ENCODE measurements at regions of chr2 and their contacts with region 1.

Region 1: DNA sequence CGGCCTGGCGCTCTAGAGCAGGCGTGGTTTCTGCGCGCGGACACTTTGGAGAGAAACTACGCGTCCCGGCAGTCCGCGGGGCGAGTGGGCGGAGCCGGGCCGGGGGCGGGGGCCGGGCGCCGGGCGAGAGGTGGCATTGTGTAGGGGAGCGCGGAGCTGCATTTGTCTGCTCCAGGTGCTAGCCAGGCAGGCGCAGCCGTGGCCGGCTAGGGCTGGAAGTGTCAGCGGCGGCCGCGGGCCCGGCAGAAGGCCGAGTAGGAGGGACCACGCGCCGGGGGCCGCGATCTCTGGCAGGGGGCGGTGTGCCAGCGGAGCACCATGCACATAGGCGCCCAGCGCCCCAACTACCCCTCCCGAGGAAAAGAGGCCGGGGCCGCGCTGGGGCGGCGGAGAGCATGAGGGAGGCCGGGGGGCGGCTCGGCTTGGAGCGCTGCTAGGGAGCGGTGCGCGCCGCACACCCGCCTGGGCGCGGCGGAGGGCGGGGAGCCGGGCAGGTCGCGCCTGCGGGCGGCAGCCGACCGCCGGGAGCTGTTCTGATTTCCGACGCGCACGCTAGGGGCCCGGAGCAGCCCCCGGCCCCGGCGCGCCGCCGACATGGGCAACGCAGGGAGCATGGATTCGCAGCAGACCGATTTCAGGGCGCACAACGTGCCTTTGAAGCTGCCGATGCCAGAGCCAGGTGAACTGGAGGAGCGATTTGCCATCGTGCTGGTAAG is at the start of gene FMNL2:
- DNase-seq: peak; percentile 83
- H3K4me3 ChIP-seq: peak within 1 kb of the TSS; percentile 81 to 93 (median 81)
- H3K27ac ChIP-seq: peak within 1 kb of the TSS; percentile 59
- H3K4me1 ChIP-seq: peaks cover 16% of the 10 kb centered on the region
- H3K27me3 ChIP-seq: no peaks in the 10 kb centered on the region
- CTCF ChIP-seq: peak in 1 of 2 donors; percentile 8
- total RNA-seq, gene FMNL2: 26.5 to 62.9 TPM

Region 2: GRCh38 chr2:152234277-152234676 is 100.9 kb before region 1 on chr2:
- CTCF ChIA-PET with region 1: no interaction called
- dilution Hi-C with region 1: loop called (anchors 5 kb)
- in situ Hi-C with region 1: no loop called
- intact Hi-C with region 1: no loop called
- DNase-seq: no peak
- H3K4me3 ChIP-seq: no peak overlapping the region
- H3K27ac ChIP-seq: no peak overlapping the region
- H3K4me1 ChIP-seq: no peaks in the 10 kb centered on the region
- H3K27me3 ChIP-seq: no peaks in the 10 kb centered on the region
- CTCF ChIP-seq: no peak

Region 3: DNA sequence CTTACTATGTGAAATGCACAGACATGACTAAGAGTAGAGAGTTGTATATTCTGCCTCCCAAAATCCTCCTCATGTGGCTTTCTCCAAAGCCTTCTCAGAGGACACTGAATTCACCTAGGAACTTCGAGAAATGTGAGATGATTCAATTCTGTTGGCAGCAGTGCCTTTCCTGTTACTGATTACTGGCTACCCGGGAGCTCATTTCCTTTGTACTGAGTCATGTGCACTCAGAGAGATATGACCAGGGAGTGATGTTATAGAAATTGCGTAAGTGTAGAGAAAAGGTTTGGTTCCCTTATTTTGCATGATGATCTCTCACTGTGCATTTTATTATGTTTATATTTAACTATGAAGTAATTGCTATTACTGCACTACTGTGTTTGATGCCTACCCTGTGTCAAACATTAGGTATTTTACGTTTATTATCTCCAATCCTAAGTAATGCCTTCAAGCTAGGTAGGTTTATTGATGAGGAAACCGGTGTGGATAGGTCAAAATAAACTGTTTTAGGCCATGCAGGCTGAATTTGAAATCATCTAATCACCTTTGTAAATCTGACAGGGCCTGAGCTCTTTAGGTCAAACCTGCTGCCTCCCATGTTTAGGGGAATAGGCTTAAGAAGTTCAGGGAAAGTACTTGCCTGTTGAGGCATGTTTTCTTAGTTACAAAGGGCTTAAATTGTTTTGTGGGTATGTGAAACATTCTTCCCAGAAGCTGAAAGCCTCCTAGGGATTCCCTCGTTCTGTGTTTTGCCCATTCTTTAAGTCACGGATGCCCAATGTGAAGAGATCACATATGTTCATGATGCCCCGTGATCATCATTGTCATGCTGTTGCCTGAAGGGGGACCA is 86.6 kb after region 1 on chr2:
- CTCF ChIA-PET with region 1: no interaction called
- dilution Hi-C with region 1: no loop called
- in situ Hi-C with region 1: no loop called
- intact Hi-C with region 1: loop called (anchors 1 kb)
- DNase-seq: peak; percentile 97
- H3K4me3 ChIP-seq: peak overlapping the region; percentile 11 to 21 (median 20)
- H3K27ac ChIP-seq: peak overlapping the region; percentile 96
- H3K4me1 ChIP-seq: peaks cover 33% of the 10 kb centered on the region
- H3K27me3 ChIP-seq: no peaks in the 10 kb centered on the region
- CTCF ChIP-seq: no peak

Region 4: GRCh38 chr2:152573168-152573567 is 238.0 kb after region 1 on chr2:
- CTCF ChIA-PET with region 1: interaction called, 3 read pairs
- dilution Hi-C with region 1: no loop called
- in situ Hi-C with region 1: no loop called
- intact Hi-C with region 1: loop called (anchors 5 kb)
- DNase-seq: peak; percentile 91
- H3K4me3 ChIP-seq: no peak overlapping the region
- H3K27ac ChIP-seq: peak overlapping the region; percentile 41
- H3K4me1 ChIP-seq: peaks cover 27% of the 10 kb centered on the region
- H3K27me3 ChIP-seq: no peaks in the 10 kb centered on the region
- CTCF ChIP-seq: no peak

Region 5: GRCh38 chr2:152635635-152636298 is 300.6 kb after region 1 on chr2:
- CTCF ChIA-PET with region 1: no interaction called
- dilution Hi-C with region 1: no loop called
- in situ Hi-C with region 1: no loop called
- intact Hi-C with region 1: loop called (anchors 2 kb)
- DNase-seq: peak; percentile 42
- H3K4me3 ChIP-seq: no peak overlapping the region
- H3K27ac ChIP-seq: no peak overlapping the region
- H3K4me1 ChIP-seq: no peaks in the 10 kb centered on the region
- H3K27me3 ChIP-seq: no peaks in the 10 kb centered on the region
- CTCF ChIP-seq: peak; percentile 70 to 78

Measured in mammary epithelial cell (primary cell).